CD4-positive, alpha-beta T cell (primary cell): ENCODE measurements at regions of chr19 and their contacts with region 1.

Region 1: GRCh38 chr19:54189735-54190502 is 539 bp upstream of the MBOAT7 start:
- DNase-seq: peak; percentile 100
- ATAC-seq: peak; percentile 60
- H3K4me3 ChIP-seq: peak overlapping the region; percentile 74
- H3K4me3 Mint-ChIP-seq: peak overlapping the region; percentile 90
- H3K27ac ChIP-seq: peak overlapping the region; percentile 99
- H3K27ac Mint-ChIP-seq: peak overlapping the region; percentile 96
- H3K4me1 ChIP-seq: peaks cover 33% of the 10 kb centered on the region
- H3K4me1 Mint-ChIP-seq: peaks cover 33% of the 10 kb centered on the region
- H3K27me3 ChIP-seq: no peaks in the 10 kb centered on the region
- H3K27me3 Mint-ChIP-seq: no peaks in the 10 kb centered on the region
- CTCF ChIP-seq: no peak

Region 2: DNA sequence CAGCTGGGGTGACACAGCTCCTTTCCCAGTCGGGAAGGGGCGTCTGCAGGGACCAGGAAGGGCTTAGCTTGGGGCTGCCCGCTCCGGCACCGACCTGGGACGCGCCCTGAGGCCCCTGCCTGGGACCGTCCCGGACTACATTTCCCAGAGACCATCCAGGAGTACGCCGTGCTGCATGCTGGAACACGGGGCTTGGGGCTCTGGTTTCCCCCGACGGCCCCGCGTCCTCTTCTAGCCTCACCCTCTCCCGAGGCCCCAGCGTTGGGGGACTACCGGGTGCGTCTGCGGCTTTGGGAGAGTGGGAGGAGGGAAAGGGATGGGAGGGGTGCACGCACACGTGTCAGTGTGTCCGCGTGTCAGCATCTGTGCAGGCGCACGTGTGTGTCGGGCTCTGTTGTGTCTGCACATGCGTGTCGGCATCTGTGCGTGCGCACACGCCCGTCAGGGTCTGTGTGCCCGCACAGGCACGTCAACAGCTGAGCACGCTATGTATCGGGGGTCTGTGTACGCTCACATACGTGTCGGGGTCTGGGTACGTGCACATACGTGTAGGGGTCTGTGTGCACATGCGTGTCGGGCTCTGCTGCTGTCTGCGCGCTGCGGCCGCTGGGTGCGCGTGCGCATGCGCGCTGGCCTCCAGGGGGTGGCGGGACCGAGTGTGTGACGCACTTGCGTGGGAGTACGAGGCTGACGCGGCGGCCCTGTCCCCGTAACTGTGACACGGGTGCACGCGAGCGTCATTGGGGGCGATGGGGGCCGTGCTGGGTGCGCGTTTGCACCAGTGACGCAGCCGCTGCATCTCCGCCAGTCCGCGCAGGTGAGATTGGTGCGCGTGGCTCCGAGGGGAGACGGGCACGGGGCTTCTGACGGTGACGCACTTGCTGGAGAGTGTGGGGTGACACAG is 652.2 kb before region 1 on chr19 and contains the start of gene ZNF331:
- CTCF ChIA-PET with region 1: no interaction called
- POLR2A ChIA-PET with region 1: no interaction called
- intact Hi-C with region 1: loop called in 1 of 2 experiments (anchors 5 kb)
- DNase-seq: peak; percentile 77 to 97 (median 88)
- ATAC-seq: peak; percentile 74
- H3K4me3 ChIP-seq: peak within 1 kb of the TSS; percentile 91
- H3K4me3 Mint-ChIP-seq: peak within 1 kb of the TSS; percentile 98
- H3K27ac ChIP-seq: peak within 1 kb of the TSS; percentile 89 to 95
- H3K27ac Mint-ChIP-seq: peak within 1 kb of the TSS; percentile 98
- H3K4me1 ChIP-seq: peaks cover 21% of the 10 kb centered on the region
- H3K4me1 Mint-ChIP-seq: peaks cover 44% of the 10 kb centered on the region
- H3K27me3 ChIP-seq: no peaks in the 10 kb centered on the region
- H3K27me3 Mint-ChIP-seq: peaks cover 9% of the 10 kb centered on the region
- CTCF ChIP-seq: no peak
- total RNA-seq, gene ZNF331: 428 to 437 TPM

Region 3: GRCh38 chr19:54115109-54116063 is 74.5 kb before region 1 on chr19 and contains the starts of genes PRPF31 and TFPT:
- CTCF ChIA-PET with region 1: no interaction called
- POLR2A ChIA-PET with region 1: interaction called, 38 read pairs
- intact Hi-C with region 1: loop called in 1 of 2 experiments (anchors 1 kb)
- DNase-seq: peak; percentile 90 to 98 (median 95)
- ATAC-seq: peak; percentile 86
- H3K4me3 ChIP-seq: peak within 1 kb of the TSS; percentile 83
- H3K4me3 Mint-ChIP-seq: peak within 1 kb of the TSS; percentile 87
- H3K27ac ChIP-seq: peak within 1 kb of the TSS; percentile 65 to 87
- H3K27ac Mint-ChIP-seq: peak within 1 kb of the TSS; percentile 81
- H3K4me1 ChIP-seq: peaks cover 33% of the 10 kb centered on the region
- H3K4me1 Mint-ChIP-seq: peaks cover 27% of the 10 kb centered on the region
- H3K27me3 ChIP-seq: no peaks in the 10 kb centered on the region
- H3K27me3 Mint-ChIP-seq: no peaks in the 10 kb centered on the region
- CTCF ChIP-seq: no peak
- total RNA-seq, gene PRPF31: 52.9 to 55.9 TPM
- total RNA-seq, gene TFPT: 10.1 to 11.2 TPM

Region 4: DNA sequence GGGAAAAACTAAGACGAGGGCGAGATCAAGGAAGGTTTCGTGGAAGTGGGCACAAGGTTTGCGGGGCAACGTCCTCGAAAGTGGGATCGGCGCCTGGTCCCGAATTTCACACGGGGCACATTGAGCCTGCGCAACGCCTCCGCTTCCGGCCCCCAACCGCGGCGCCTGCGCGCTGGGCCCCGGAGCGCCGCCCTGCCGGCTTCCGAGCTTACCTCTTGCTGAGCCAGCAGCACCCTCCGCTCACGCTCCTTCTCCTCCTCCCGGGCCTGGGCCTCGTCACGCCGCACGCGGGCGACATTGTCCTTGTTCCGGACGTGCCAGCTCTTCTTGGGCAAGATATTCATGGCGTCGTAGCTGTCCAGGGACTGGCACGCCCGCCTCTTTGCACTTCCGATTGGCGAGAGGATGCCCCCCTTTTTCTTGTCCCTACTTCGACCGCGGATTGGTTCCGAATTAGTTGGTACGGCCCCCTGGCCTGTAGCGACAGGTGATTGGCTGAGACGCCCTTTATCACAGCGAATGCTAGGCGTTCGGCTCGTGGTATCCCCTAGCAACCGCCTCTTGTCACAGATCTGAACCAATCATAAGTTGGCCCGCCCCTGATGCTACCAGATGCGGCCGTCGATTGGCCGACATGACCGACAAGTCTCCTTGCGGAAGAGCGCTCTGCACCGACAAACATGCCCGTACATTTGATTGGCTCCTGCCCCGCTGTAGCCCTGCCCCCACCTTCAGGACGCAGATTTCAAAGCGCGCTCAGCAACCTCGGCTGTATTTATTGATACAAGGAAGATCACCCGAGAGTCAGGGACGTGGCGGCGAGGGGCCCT is 30.4 kb before region 1 on chr19 and contains the start of gene LENG1:
- CTCF ChIA-PET with region 1: interaction called, 5 read pairs
- POLR2A ChIA-PET with region 1: interaction called, 104 read pairs
- intact Hi-C with region 1: loop called in 1 of 2 experiments (anchors 1 kb)
- DNase-seq: peak; percentile 91 to 100 (median 98)
- ATAC-seq: peak; percentile 84
- H3K4me3 ChIP-seq: peak within 1 kb of the TSS; percentile 90
- H3K4me3 Mint-ChIP-seq: peak within 1 kb of the TSS; percentile 98
- H3K27ac ChIP-seq: peak within 1 kb of the TSS; percentile 86 to 92
- H3K27ac Mint-ChIP-seq: peak within 1 kb of the TSS; percentile 94
- H3K4me1 ChIP-seq: peaks cover 81% of the 10 kb centered on the region
- H3K4me1 Mint-ChIP-seq: peaks cover 55% of the 10 kb centered on the region
- H3K27me3 ChIP-seq: no peaks in the 10 kb centered on the region
- H3K27me3 Mint-ChIP-seq: no peaks in the 10 kb centered on the region
- CTCF ChIP-seq: no peak
- total RNA-seq, gene LENG1: 14.4 to 16.0 TPM

Region 5: GRCh38 chr19:54203151-54203611 is 13.3 kb after region 1 on chr19:
- CTCF ChIA-PET with region 1: interaction called, 19 read pairs
- POLR2A ChIA-PET with region 1: interaction called, 148 read pairs
- intact Hi-C with region 1: loop called (anchors 1 kb)
- DNase-seq: no peak
- ATAC-seq: no peak
- H3K4me3 ChIP-seq: no peak overlapping the region
- H3K4me3 Mint-ChIP-seq: peak overlapping the region; percentile 73
- H3K27ac ChIP-seq: no peak overlapping the region
- H3K27ac Mint-ChIP-seq: peak overlapping the region; percentile 93
- H3K4me1 ChIP-seq: peaks cover 83% of the 10 kb centered on the region
- H3K4me1 Mint-ChIP-seq: peaks cover 68% of the 10 kb centered on the region
- H3K27me3 ChIP-seq: no peaks in the 10 kb centered on the region
- H3K27me3 Mint-ChIP-seq: no peaks in the 10 kb centered on the region
- CTCF ChIP-seq: no peak

Region 6: GRCh38 chr19:54231077-54231931 is 41.4 kb after region 1 on chr19:
- CTCF ChIA-PET with region 1: no interaction called
- POLR2A ChIA-PET with region 1: no interaction called
- intact Hi-C with region 1: loop called in 1 of 2 experiments (anchors 5 kb)
- DNase-seq: peak; percentile 73 to 93 (median 86)
- ATAC-seq: peak; percentile 99
- H3K4me3 ChIP-seq: no peak overlapping the region
- H3K4me3 Mint-ChIP-seq: no peak overlapping the region
- H3K27ac ChIP-seq: no peak overlapping the region
- H3K27ac Mint-ChIP-seq: no peak overlapping the region
- H3K4me1 ChIP-seq: peaks cover 5% of the 10 kb centered on the region
- H3K4me1 Mint-ChIP-seq: peaks cover 4% of the 10 kb centered on the region
- H3K27me3 ChIP-seq: peaks cover 11 to 20% of the 10 kb centered on the region in 2 experiments
- H3K27me3 Mint-ChIP-seq: peaks cover 40% of the 10 kb centered on the region
- CTCF ChIP-seq: peak; percentile 84

Region 7: DNA sequence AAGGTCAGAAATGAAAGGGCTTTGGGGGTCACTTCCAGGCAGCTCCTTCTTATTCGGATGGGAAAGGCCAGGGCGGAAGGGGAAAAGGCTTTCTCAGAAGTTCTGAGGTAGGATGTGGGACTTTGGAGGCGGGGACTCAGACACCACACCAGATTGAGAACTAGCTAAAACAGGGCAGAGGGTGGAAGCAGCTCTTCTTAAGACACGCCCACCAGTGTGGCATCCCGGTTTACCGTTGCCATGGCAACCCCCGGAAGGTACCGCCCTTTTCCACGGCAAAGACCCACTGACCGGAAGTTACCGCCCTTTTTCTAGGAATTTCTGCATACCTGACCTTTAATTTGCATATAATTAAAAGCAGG is 126.8 kb after region 1 on chr19:
- CTCF ChIA-PET with region 1: no interaction called
- POLR2A ChIA-PET with region 1: no interaction called
- intact Hi-C with region 1: no loop called
- DNase-seq: peak in 2 of 14 experiments; percentile 37 to 46
- ATAC-seq: no peak
- H3K4me3 ChIP-seq: no peak overlapping the region
- H3K4me3 Mint-ChIP-seq: no peak overlapping the region
- H3K27ac ChIP-seq: no peak overlapping the region
- H3K27ac Mint-ChIP-seq: no peak overlapping the region
- H3K4me1 ChIP-seq: peaks cover 6% of the 10 kb centered on the region
- H3K4me1 Mint-ChIP-seq: no peaks in the 10 kb centered on the region
- H3K27me3 ChIP-seq: peaks cover 13 to 27% of the 10 kb centered on the region in 2 experiments
- H3K27me3 Mint-ChIP-seq: peaks cover 49% of the 10 kb centered on the region
- CTCF ChIP-seq: no peak

Region 8: DNA sequence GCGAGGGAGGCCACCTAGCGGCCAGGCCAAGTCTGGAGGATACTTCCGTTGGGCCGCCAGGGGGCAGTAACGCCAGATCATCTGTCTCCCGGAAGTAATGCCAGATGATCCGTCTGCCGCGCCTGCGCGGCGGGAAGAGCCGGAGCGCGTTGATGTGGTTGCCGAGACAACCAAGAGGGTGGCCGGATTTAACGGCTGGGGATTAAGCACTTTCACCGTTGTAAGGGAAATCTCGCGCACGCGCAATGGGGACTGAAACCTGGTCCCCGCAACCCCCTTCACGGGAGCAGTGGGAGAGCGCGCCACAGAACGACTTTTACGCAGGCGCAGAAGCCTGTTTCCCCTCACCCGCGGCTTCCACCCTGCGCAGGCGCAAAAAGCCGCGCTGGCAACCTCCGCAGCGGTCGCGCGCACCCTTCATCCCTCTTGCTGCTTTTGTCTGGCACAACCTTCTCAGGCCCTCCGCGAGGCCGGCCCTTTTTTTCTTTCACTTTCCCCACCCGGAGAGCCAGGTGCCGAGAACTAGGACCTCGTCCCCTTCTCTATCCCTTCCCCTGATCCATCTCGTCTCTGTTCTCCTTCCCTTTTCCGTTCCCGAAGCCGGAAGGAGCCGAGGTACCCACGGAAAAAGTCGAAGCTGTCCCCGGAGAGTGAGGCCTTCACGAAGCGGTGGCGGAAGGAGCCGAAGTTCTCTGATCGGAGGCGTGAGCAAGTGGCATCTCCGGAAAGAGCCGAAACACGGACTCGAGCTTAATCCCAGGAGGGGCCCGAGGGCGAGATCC is 1464.0 kb after region 1 on chr19:
- CTCF ChIA-PET with region 1: no interaction called
- POLR2A ChIA-PET with region 1: interaction called, 7 read pairs
- intact Hi-C with region 1: loop called in 1 of 2 experiments (anchors 10 kb)
- DNase-seq: peak; percentile 98 to 100 (median 100)
- ATAC-seq: peak; percentile 79
- H3K4me3 ChIP-seq: peak overlapping the region; percentile 70
- H3K4me3 Mint-ChIP-seq: peak overlapping the region; percentile 94
- H3K27ac ChIP-seq: peak overlapping the region; percentile 96 to 100
- H3K27ac Mint-ChIP-seq: peak overlapping the region; percentile 93
- H3K4me1 ChIP-seq: peaks cover 46% of the 10 kb centered on the region
- H3K4me1 Mint-ChIP-seq: peaks cover 43% of the 10 kb centered on the region
- H3K27me3 ChIP-seq: no peaks in the 10 kb centered on the region
- H3K27me3 Mint-ChIP-seq: no peaks in the 10 kb centered on the region
- CTCF ChIP-seq: peak; percentile 100